H1 (cell line): ENCODE measurements at regions of chr17 and their contacts with region 1.

Region 1: GRCh38 chr17:1532836-1533602 is 16.6 kb upstream of the INPP5K start:
- DNase-seq: peak; percentile 31 to 74
- H3K4me3 ChIP-seq: no peak overlapping the region
- H3K27ac ChIP-seq: no peak overlapping the region
- H3K4me1 ChIP-seq: no peaks in the 10 kb centered on the region
- H3K27me3 ChIP-seq: no peaks in the 10 kb centered on the region
- CTCF ChIP-seq: peak; percentile 81 to 94 (median 83)
- EP300 ChIP-seq: no peak
- POLR2A ChIP-seq: no peak
- RAD21 ChIP-seq: peak; percentile 80 to 84

Region 2: DNA sequence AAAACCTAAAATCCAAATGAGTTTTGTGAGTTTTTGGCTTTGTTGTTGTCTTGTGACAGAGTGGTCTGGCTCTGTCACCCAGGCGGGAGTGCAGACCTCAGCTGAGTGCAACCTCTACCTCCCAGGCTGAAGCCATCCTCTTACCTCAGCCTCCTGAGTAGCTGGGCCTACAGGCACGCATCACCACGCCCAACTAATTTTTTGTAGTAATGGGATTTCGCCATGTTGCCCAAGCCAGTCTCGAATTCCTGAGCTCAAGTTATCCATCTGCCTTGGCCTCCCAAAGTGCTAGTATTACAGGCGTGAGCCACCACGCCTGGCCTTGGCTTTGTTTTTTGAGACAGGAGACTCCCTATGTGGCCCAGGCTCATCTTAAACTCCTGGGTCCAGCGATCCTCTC is 92.1 kb before region 1 on chr17:
- CTCF ChIA-PET with region 1: no interaction called
- POLR2A ChIA-PET with region 1: no interaction called
- DNase-seq: no peak
- H3K4me3 ChIP-seq: no peak overlapping the region
- H3K27ac ChIP-seq: no peak overlapping the region
- H3K4me1 ChIP-seq: no peaks in the 10 kb centered on the region
- H3K27me3 ChIP-seq: no peaks in the 10 kb centered on the region
- CTCF ChIP-seq: no peak
- EP300 ChIP-seq: no peak
- POLR2A ChIP-seq: no peak
- RAD21 ChIP-seq: no peak

Region 3: GRCh38 chr17:1495265-1495989 is 37.6 kb before region 1 on chr17:
- CTCF ChIA-PET with region 1: interaction called, 10 read pairs
- POLR2A ChIA-PET with region 1: interaction called, 4 read pairs
- DNase-seq: no peak
- H3K4me3 ChIP-seq: no peak overlapping the region
- H3K27ac ChIP-seq: no peak overlapping the region
- H3K4me1 ChIP-seq: peaks cover 0 to 9% (median 4%) of the 10 kb centered on the region in 4 experiments; a peak in 4 of 7 replicates
- H3K27me3 ChIP-seq: no peaks in the 10 kb centered on the region
- CTCF ChIP-seq: no peak
- EP300 ChIP-seq: no peak
- POLR2A ChIP-seq: no peak
- RAD21 ChIP-seq: no peak

Region 4: DNA sequence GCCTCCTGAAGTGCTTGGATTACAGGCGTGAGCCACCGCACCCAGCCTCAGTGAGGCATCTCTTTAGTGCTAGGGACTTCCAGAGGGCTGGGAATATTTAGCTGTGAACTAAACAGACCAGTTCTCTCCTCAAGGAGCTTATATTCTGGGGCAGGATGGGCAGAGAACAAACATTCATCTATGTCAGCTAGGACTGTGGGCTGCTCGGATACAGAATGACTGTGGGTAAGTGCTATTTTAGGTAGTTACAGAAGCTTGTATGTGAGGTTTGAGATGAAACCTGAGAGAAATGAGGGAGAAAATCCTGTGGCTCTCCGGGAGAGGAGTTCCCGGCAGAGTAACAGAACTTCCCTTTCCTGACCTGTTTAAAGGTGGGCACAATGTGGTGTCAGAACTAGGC is 10.4 kb before region 1 on chr17:
- CTCF ChIA-PET with region 1: interaction called, 52 read pairs
- POLR2A ChIA-PET with region 1: interaction called, 22 read pairs
- DNase-seq: no peak
- H3K4me3 ChIP-seq: no peak overlapping the region
- H3K27ac ChIP-seq: no peak overlapping the region
- H3K4me1 ChIP-seq: no peaks in the 10 kb centered on the region; a peak in 1 of 7 replicates
- H3K27me3 ChIP-seq: no peaks in the 10 kb centered on the region
- CTCF ChIP-seq: no peak
- EP300 ChIP-seq: no peak
- POLR2A ChIP-seq: no peak
- RAD21 ChIP-seq: no peak

Region 5: GRCh38 chr17:1553354-1554266 is 20.6 kb after region 1 on chr17:
- CTCF ChIA-PET with region 1: interaction called, 13 read pairs
- POLR2A ChIA-PET with region 1: interaction called, 6 read pairs
- DNase-seq: no peak
- H3K4me3 ChIP-seq: no peak overlapping the region
- H3K27ac ChIP-seq: no peak overlapping the region
- H3K4me1 ChIP-seq: no peaks in the 10 kb centered on the region
- H3K27me3 ChIP-seq: no peaks in the 10 kb centered on the region; a peak in 1 of 7 replicates
- CTCF ChIP-seq: no peak
- EP300 ChIP-seq: no peak
- POLR2A ChIP-seq: no peak
- RAD21 ChIP-seq: no peak